BJ (cell line): ENCODE measurements at regions of chrX and their contacts with region 1.

Region 1: GRCh38 chrX:16610121-16610621 is 39.8 kb upstream of the S100G start:
- DNase-seq: peak; percentile 39
- H3K4me3 ChIP-seq: no peak overlapping the region
- H3K27me3 ChIP-seq: no peaks in the 10 kb centered on the region
- CTCF ChIP-seq: no peak

Region 2: DNA sequence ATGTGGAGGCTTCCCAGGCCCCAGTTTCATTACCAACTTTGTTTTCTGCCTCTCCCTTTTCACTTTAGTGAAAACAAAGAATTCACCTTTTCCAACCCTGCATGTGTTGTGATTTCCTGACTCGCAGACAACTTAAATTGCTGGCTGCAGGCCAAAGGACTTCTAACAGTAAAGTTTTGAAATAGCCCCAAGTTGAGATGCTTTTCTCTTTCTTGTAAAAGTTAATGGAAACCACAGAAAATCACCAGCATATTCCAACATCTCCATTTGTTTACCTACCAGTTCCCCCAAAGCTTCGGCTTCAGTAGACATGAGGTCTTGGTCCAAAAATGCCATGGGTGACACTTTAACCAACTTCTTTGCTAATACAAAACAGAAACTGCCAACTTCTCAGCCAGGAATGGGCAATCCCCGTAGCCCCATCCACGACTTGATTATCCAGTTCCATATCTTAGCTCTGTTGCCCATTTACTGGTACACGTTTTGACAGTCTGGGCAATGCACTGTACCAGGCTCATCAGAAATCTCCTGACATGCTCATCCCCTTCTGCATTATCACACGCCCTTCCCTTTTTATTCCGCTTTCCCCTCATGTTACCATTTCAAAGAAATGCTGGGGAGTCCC is 98.3 kb before region 1 on chrX:
- CTCF ChIA-PET with region 1: no interaction called
- POLR2A ChIA-PET with region 1: no interaction called
- DNase-seq: peak; percentile 30
- H3K4me3 ChIP-seq: no peak overlapping the region
- H3K27me3 ChIP-seq: no peaks in the 10 kb centered on the region
- CTCF ChIP-seq: no peak

Region 3: GRCh38 chrX:16587836-16588235 is 22.3 kb before region 1 on chrX:
- CTCF ChIA-PET with region 1: no interaction called
- POLR2A ChIA-PET with region 1: interaction called, 11 read pairs
- DNase-seq: no peak
- H3K4me3 ChIP-seq: no peak overlapping the region
- H3K27me3 ChIP-seq: no peaks in the 10 kb centered on the region
- CTCF ChIP-seq: no peak

Region 4: GRCh38 chrX:16628946-16629595 is 18.9 kb after region 1 on chrX:
- CTCF ChIA-PET with region 1: no interaction called
- POLR2A ChIA-PET with region 1: no interaction called
- DNase-seq: no peak
- H3K4me3 ChIP-seq: no peak overlapping the region
- H3K27me3 ChIP-seq: no peaks in the 10 kb centered on the region
- CTCF ChIP-seq: no peak